ENCODE measurements at regions of chr6 and their contacts with region 1.

Region 1: GRCh38 chr6:35474131-35474940 is 6.1 kb downstream of the RPL10A start:
- DNase-seq: no peak
- H3K4me3 Mint-ChIP-seq: no peak overlapping the region
- H3K27ac Mint-ChIP-seq: no peak overlapping the region
- H3K4me1 Mint-ChIP-seq: peaks cover 13% of the 10 kb centered on the region
- H3K27me3 Mint-ChIP-seq: no peaks in the 10 kb centered on the region
- CTCF ChIP-seq: no peak

Region 2: GRCh38 chr6:35484871-35485392 is 10.6 kb after region 1 on chr6:
- CTCF ChIA-PET with region 1: interaction called, 3 read pairs
- POLR2A ChIA-PET with region 1: interaction called, 23 read pairs
- intact Hi-C with region 1: loop called (anchors 2 kb)
- DNase-seq: peak; percentile 70
- H3K4me3 Mint-ChIP-seq: peak overlapping the region; percentile 60
- H3K27ac Mint-ChIP-seq: peak overlapping the region; percentile 88
- H3K4me1 Mint-ChIP-seq: peaks cover 30% of the 10 kb centered on the region
- H3K27me3 Mint-ChIP-seq: no peaks in the 10 kb centered on the region
- CTCF ChIP-seq: no peak

Region 3: GRCh38 chr6:35489995-35490733 is 15.8 kb after region 1 on chr6:
- CTCF ChIA-PET with region 1: no interaction called
- POLR2A ChIA-PET with region 1: interaction called, 45 read pairs
- intact Hi-C with region 1: loop called (anchors 2 kb)
- DNase-seq: no peak
- H3K4me3 Mint-ChIP-seq: no peak overlapping the region
- H3K27ac Mint-ChIP-seq: no peak overlapping the region
- H3K4me1 Mint-ChIP-seq: peaks cover 41% of the 10 kb centered on the region
- H3K27me3 Mint-ChIP-seq: no peaks in the 10 kb centered on the region
- CTCF ChIP-seq: no peak

Region 4: GRCh38 chr6:35562053-35562452 is 87.7 kb after region 1 on chr6:
- CTCF ChIA-PET with region 1: no interaction called
- POLR2A ChIA-PET with region 1: no interaction called
- intact Hi-C with region 1: no loop called
- DNase-seq: no peak
- H3K4me3 Mint-ChIP-seq: no peak overlapping the region
- H3K27ac Mint-ChIP-seq: no peak overlapping the region
- H3K4me1 Mint-ChIP-seq: no peaks in the 10 kb centered on the region
- H3K27me3 Mint-ChIP-seq: no peaks in the 10 kb centered on the region
- CTCF ChIP-seq: no peak

Region 5: GRCh38 chr6:35751594-35751993 is 277.3 kb after region 1 on chr6:
- CTCF ChIA-PET with region 1: no interaction called
- POLR2A ChIA-PET with region 1: no interaction called
- intact Hi-C with region 1: no loop called
- DNase-seq: no peak
- H3K4me3 Mint-ChIP-seq: no peak overlapping the region
- H3K27ac Mint-ChIP-seq: no peak overlapping the region
- H3K4me1 Mint-ChIP-seq: no peaks in the 10 kb centered on the region
- H3K27me3 Mint-ChIP-seq: no peaks in the 10 kb centered on the region
- CTCF ChIP-seq: no peak